Activated naive CD4-positive, alpha-beta T cell treated with anti-CD3 and anti-CD28 coated beads for 36 hours (primary cell): ENCODE measurements at regions of chr5 and their contacts with region 1.

Region 1: GRCh38 chr5:88729084-88729828 is 153.7 kb downstream of the MEF2C start:
- DNase-seq: peak; percentile 76
- H3K4me3 Mint-ChIP-seq: no peak overlapping the region
- H3K27ac Mint-ChIP-seq: no peak overlapping the region
- H3K4me1 Mint-ChIP-seq: peaks cover 4% of the 10 kb centered on the region
- H3K27me3 Mint-ChIP-seq: peaks cover 9% of the 10 kb centered on the region

Region 2: GRCh38 chr5:87780831-87781760 is 948.2 kb before region 1 on chr5:
- CTCF ChIA-PET with region 1: interaction called, 31 read pairs
- intact Hi-C with region 1: loop called (anchors 1 kb)
- DNase-seq: peak; percentile 88
- H3K4me3 Mint-ChIP-seq: no peak overlapping the region
- H3K27ac Mint-ChIP-seq: no peak overlapping the region
- H3K4me1 Mint-ChIP-seq: peaks cover 3% of the 10 kb centered on the region
- H3K27me3 Mint-ChIP-seq: peaks cover 24% of the 10 kb centered on the region

Region 3: GRCh38 chr5:88740604-88741187 is 11.4 kb after region 1 on chr5:
- CTCF ChIA-PET with region 1: interaction called, 26 read pairs
- intact Hi-C with region 1: no loop called
- DNase-seq: no peak
- H3K4me3 Mint-ChIP-seq: no peak overlapping the region
- H3K27ac Mint-ChIP-seq: no peak overlapping the region
- H3K4me1 Mint-ChIP-seq: no peaks in the 10 kb centered on the region
- H3K27me3 Mint-ChIP-seq: peaks cover 20% of the 10 kb centered on the region

Region 4: DNA sequence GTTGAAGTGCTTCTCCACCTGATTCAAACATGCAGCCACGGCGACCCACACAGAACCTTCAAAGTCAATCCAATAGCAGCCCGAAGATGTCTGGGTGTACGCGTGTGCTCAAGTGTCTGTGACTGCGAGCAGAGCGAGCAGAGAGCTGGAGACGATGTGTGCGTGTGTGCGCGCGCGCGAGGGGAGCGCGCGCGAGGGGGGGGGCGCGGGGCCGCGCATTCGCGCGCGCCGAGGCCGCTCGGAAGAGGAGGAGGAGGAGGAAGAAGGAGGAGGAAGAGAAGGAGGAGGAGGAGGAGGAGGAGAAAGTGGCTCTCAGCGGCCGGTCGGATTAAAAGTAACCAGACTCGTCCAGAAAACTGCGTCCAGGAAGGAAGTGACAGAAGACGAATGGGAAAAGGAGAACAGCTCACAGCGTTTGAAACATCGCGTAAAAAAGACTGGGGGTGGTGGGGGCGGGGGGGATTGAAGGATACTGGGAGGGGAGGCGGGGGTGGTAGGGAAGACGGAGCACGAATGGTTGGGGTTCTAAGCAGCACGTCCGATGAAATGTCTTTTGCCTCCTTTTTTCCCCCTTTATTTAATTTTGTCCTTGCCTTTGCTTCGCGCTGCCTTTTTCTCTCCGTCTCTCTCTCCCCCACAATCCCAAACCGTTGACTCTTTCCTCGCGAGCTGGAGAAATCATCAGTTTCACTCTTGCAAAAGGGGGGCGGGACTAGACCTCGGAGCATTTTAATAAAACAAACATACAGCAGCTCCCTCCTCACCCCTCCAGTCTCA is 154.0 kb after region 1 on chr5 and contains the start of gene MEF2C:
- CTCF ChIA-PET with region 1: interaction called, 3 read pairs
- intact Hi-C with region 1: loop called (anchors 5 kb)
- DNase-seq: peak; percentile 12
- H3K4me3 Mint-ChIP-seq: peak within 1 kb of the TSS; percentile 76
- H3K27ac Mint-ChIP-seq: no peak within 1 kb of the TSS
- H3K4me1 Mint-ChIP-seq: peaks cover 20% of the 10 kb centered on the region
- H3K27me3 Mint-ChIP-seq: peaks cover 57% of the 10 kb centered on the region
- total RNA-seq, gene MEF2C: not detected

Region 5: DNA sequence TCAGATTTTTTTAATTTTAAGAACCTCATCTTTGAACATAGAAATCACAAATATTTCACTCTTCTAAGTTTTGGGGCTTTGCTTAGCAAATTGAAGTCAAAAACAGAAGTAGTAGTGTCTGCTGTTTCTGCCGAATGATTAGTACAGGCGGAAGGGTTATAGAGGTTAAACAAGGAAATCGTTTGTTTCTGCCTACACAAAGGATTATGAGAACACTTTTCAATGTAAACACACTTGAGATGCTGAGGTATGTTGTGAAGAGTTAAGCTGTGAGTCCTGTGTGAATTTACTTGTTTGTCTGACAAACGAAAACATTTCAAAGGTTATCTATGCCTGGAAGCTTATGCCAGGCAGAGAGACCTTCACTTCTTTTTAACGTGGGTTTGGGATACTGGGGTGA is 1455.5 kb after region 1 on chr5:
- CTCF ChIA-PET with region 1: no interaction called
- intact Hi-C with region 1: loop called (anchors 1 kb)
- DNase-seq: no peak
- H3K4me3 Mint-ChIP-seq: no peak overlapping the region
- H3K27ac Mint-ChIP-seq: no peak overlapping the region
- H3K4me1 Mint-ChIP-seq: no peaks in the 10 kb centered on the region
- H3K27me3 Mint-ChIP-seq: peaks cover 7% of the 10 kb centered on the region

Region 6: DNA sequence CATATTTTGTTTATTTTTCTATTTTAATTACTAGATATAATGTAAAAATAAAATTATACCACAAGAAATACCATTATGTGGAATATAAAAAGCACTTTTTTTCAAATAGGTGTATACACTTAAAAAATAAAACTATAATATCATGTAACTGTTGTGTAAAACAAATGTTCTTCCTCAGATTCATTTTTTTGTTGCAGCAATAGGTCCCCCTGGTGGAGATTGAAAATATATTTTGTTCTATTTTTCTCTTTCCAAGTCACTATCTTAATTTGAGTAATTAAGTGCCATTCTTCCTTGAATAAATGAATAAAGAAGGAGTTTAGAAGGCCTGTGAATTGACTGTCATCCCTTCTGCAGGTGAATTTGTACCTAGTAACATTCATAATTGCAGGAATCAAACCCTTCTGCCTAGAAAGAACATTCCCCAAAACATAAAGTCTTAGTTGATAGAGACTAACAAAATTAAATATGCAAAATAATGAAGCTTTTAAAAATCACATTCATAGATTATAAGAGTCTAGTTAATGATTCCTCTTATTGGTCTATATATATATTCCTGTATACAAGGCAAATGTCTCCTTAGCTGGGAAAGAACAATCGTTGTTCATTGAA is 1656.9 kb after region 1 on chr5:
- CTCF ChIA-PET with region 1: interaction called, 3 read pairs
- intact Hi-C with region 1: loop called (anchors 1 kb)
- DNase-seq: no peak
- H3K4me3 Mint-ChIP-seq: no peak overlapping the region
- H3K27ac Mint-ChIP-seq: no peak overlapping the region
- H3K4me1 Mint-ChIP-seq: peaks cover 5% of the 10 kb centered on the region
- H3K27me3 Mint-ChIP-seq: peaks cover 4% of the 10 kb centered on the region

Region 7: DNA sequence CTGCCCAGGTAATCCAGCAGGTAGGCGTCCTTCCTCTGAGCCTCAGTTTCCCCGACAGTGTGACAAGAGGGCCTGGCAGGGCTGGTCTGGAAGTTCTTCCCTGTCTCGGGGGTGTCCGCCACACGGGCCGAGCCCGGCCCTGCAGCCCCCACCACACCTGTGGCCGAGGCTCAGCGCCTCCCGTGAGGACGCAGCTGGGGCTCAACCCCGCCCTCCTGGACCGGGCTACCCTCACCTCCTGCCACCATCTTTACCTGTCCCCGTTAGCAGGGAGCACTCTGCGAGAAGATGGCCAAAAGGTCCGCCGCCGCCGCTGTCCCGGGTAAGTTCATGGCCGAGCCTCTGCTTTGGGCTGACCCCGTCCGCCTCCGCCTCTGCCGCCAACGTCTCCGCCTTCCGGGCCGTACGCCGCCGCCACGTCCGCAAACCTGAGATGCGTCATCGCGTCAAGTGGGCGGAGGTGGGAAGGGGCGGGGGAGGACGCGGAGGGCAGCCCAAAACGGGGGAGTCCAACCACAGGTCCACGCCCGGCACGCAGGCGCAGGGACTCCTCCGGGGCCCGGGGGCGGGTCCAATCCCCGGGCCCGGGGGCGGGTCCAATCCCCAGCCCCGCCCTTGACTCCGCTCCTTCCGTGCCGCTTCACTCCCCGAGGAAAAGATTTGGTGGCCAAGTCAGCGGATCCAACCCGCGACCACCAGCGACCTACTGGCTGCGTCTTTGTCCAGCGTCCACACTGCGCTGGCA is 1800.1 kb after region 1 on chr5 and contains the start of gene LYSMD3:
- CTCF ChIA-PET with region 1: no interaction called
- intact Hi-C with region 1: loop called (anchors 1 kb)
- DNase-seq: peak; percentile 98
- H3K4me3 Mint-ChIP-seq: peak within 1 kb of the TSS; percentile 95
- H3K27ac Mint-ChIP-seq: peak within 1 kb of the TSS; percentile 90
- H3K4me1 Mint-ChIP-seq: peaks cover 22% of the 10 kb centered on the region
- H3K27me3 Mint-ChIP-seq: peaks cover 6% of the 10 kb centered on the region
- total RNA-seq, gene LYSMD3: 10.2 to 11.1 TPM